ENCODE measurements at regions of chr5 and their contacts with region 1.

Region 1: DNA sequence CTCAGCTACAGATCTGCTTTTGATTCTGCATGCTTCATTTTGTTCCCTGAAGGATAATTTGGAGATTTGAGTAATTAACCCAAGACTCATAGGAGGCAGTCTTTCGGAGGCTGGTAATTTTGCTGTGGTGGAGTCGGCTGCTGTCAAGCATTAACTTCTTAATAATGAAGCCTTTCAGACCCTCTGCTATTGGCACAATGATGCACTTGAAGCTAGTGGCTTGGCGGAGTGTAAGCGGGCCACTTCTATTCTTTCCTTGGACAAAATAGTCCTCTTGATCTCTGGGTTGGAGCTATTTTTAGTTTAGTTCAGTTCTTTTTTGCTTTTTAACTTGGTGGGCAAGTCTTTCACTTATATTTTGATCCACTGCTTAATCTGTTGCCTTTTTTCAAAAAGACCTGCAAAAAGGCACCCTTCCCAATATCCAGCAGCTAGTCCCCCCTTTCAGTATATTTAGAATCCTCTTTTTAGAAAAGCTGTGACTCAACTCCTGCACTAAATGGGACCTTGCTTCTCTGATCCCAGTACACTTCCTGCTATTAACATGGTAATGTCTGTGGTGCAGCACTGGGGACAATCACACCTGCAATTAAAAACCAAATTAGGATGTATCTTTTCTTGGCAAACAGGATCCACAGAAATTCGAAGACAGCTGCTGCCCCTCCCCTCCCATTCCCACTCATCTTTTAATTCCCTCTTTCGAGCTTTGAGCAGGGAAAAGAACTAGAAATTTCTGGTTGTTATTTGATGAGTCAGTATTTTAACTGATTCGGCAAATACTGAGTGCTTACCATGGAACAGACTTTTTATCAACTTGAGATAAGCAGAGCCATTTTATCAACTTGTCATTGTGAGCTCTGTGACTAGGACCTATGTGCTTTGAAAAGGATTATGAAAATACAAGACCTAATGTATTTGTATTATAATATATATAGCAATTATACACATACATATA is 169.4 kb upstream of the ANKRD55 start:
- DNase-seq: no peak
- ATAC-seq: no peak
- H3K4me3 ChIP-seq: no peak overlapping the region
- H3K27ac ChIP-seq: no peak overlapping the region
- H3K4me1 ChIP-seq: no peaks in the 10 kb centered on the region
- H3K27me3 ChIP-seq: no peaks in the 10 kb centered on the region; a peak in 1 of 4 replicates
- CTCF ChIP-seq: no peak
- EP300 ChIP-seq: no peak
- POLR2A ChIP-seq: no peak
- RAD21 ChIP-seq: no peak

Region 2: DNA sequence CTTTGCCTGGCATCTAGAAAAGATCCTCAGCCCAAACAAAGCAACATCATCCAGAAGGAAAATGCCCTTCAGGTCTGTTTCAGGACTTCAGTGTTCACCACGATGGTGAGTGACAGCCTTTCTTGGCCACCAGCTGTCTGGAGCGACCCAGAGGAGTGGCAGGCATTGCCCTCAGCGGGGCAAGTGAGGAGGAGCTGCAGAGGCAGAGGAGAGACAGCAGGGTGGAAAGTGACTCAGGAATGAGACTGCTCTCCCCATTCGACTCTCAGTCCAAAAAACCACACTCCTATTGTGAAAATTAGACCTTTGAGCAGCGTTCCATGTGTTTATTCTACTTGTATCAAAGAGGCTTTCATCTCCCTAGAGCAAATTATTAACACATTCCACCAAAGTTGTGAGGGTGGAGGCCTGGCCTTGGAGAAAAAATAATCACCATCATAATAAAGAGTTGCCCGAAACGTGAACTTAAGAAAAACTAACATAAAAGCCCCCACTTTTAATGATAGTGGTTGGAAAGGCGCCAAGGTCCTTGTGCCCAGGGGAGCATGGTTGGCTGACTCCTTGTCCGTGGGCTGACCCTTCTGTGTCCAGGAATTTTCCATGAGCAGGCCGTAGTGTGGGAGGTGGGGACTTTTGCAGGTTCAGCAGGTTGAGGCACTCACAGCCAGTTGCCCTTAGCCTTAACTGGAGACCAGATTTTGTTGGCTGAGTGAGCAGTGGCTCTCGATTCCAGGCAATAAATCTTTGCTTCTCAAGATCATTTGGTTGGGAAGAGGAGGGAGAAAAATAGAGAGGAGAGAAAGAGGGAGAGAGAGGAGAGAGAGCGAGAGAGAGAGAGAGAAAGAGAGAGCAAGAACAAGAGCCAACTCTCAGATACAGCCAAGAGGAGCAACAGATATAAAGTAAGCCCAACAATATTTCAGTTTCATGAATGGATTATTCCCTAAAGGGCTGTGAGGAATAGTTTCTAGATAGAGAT is 43.6 kb before region 1 on chr5:
- CTCF ChIA-PET with region 1: no interaction called
- POLR2A ChIA-PET with region 1: no interaction called
- RAD21 ChIA-PET with region 1: no interaction called
- SMC1A ChIA-PET with region 1: no interaction called
- in situ Hi-C with region 1: no loop called
- intact Hi-C with region 1: no loop called
- DNase-seq: no peak
- ATAC-seq: no peak
- H3K4me3 ChIP-seq: no peak overlapping the region
- H3K27ac ChIP-seq: no peak overlapping the region
- H3K4me1 ChIP-seq: no peaks in the 10 kb centered on the region
- H3K27me3 ChIP-seq: peaks cover 0 to 3% of the 10 kb centered on the region in 2 experiments; a peak in 1 of 4 replicates
- CTCF ChIP-seq: no peak
- EP300 ChIP-seq: no peak
- POLR2A ChIP-seq: no peak
- RAD21 ChIP-seq: no peak

Region 3: GRCh38 chr5:56415356-56415765 is 12.8 kb after region 1 on chr5:
- CTCF ChIA-PET with region 1: interaction called, 3 read pairs
- POLR2A ChIA-PET with region 1: no interaction called
- RAD21 ChIA-PET with region 1: interaction called, 7 read pairs
- SMC1A ChIA-PET with region 1: interaction called, 11 read pairs
- in situ Hi-C with region 1: no loop called
- intact Hi-C with region 1: no loop called
- DNase-seq: peak; percentile 92
- ATAC-seq: peak; percentile 84
- H3K4me3 ChIP-seq: peak overlapping the region; percentile 48; the same call in 1 of the 2 replicates
- H3K27ac ChIP-seq: peak overlapping the region; percentile 79
- H3K4me1 ChIP-seq: peaks cover 40% of the 10 kb centered on the region
- H3K27me3 ChIP-seq: no peaks in the 10 kb centered on the region
- CTCF ChIP-seq: no peak
- EP300 ChIP-seq: peak in 1 of 2 experiments; percentile 39; a peak in 2 of 4 replicates
- POLR2A ChIP-seq: 0 out of 2 replicates have a peak, but pooled peaks have one; percentile 26
- RAD21 ChIP-seq: 0 out of 2 replicates have a peak, but pooled peaks have one; percentile 10

Region 4: DNA sequence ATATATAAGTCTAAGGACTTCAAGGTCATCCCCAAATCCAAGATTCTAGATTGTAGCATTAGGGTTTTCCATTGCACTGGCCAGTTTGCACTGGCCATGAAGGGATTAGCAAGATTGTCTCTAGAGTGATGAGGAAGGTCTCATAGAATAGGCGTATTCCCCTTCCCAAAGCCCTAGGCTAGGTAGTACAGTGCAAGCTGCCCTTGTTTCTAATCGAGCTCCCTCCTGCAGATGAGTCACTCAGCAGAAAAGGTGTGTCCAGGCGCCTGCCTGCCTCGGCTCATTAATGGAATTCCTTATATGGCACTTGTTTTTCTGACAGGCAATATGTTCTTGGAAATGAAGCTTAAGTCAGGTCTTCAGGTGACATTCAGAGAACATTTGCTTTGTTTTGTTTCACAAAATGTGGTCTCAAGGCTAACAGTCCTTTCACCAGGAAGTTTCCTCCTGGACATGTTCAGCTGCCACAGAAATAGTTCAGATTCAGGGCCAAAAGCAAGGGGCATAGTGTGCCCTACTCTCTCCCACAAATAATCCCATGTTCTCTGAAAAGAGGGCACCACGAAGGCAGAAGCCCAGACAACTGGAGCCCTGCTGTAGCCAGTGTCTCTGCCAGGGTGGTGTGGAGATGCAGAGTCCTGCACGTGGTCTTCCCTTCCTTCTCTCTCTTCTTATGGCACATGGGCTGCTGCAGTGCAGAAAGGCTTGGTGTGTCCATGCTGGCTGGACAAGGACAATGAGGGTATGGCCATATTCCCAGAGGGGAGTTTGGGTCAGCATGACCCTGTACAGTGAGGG is 131.7 kb after region 1 on chr5:
- CTCF ChIA-PET with region 1: no interaction called
- POLR2A ChIA-PET with region 1: no interaction called
- RAD21 ChIA-PET with region 1: no interaction called
- SMC1A ChIA-PET with region 1: no interaction called
- in situ Hi-C with region 1: no loop called
- intact Hi-C with region 1: no loop called
- DNase-seq: no peak
- ATAC-seq: no peak
- H3K4me3 ChIP-seq: no peak overlapping the region
- H3K27ac ChIP-seq: no peak overlapping the region
- H3K4me1 ChIP-seq: no peaks in the 10 kb centered on the region
- H3K27me3 ChIP-seq: no peaks in the 10 kb centered on the region
- CTCF ChIP-seq: no peak
- EP300 ChIP-seq: no peak
- POLR2A ChIP-seq: no peak
- RAD21 ChIP-seq: no peak